HepG2 (cell line): ENCODE measurements at regions of chr5 and their contacts with region 1.

Region 1: GRCh38 chr5:151659001-151659754 is 27.5 kb downstream of the SPARC start:
- DNase-seq: peak; percentile 57
- ATAC-seq: peak; percentile 96
- H3K4me3 ChIP-seq: no peak overlapping the region
- H3K27ac ChIP-seq: no peak overlapping the region
- H3K4me1 ChIP-seq: peaks cover 9% of the 10 kb centered on the region
- H3K27me3 ChIP-seq: peaks cover 0 to 10% of the 10 kb centered on the region in 2 experiments; a peak in 2 of 5 replicates
- CTCF ChIP-seq: peak; percentile 91
- EP300 ChIP-seq: no peak
- POLR2A ChIP-seq: no peak
- RAD21 ChIP-seq: peak; percentile 90

Region 2: DNA sequence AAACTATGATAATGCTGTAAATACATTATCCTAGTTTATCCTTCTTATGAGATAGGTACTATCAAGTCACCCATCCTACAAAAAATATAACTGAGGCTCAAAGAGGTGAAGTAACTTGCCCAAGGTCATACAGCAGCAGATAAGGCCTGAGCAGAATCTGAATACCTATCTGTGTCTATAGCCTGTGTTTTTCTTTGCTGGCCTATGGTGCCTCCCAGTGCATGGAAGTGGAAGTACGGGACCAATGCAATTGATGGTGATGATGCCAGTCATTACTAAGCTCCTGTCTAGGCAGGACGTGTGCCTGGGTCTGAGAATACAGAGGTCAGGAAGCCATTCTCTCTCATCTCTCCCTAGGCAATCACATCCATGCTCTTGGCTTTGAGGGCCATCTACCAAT is 135.8 kb before region 1 on chr5:
- CTCF ChIA-PET with region 1: no interaction called
- POLR2A ChIA-PET with region 1: no interaction called
- in situ Hi-C with region 1: loop called (anchors 10 kb)
- intact Hi-C with region 1: no loop called
- DNase-seq: peak; percentile 60
- ATAC-seq: peak; percentile 92
- H3K4me3 ChIP-seq: no peak overlapping the region
- H3K27ac ChIP-seq: no peak overlapping the region
- H3K4me1 ChIP-seq: no peaks in the 10 kb centered on the region
- H3K27me3 ChIP-seq: peaks cover 0 to 12% of the 10 kb centered on the region in 2 experiments; a peak in 3 of 5 replicates
- CTCF ChIP-seq: peak; percentile 73
- EP300 ChIP-seq: no peak
- POLR2A ChIP-seq: no peak
- RAD21 ChIP-seq: peak; percentile 69

Region 3: GRCh38 chr5:151719228-151720000 is 60.2 kb after region 1 on chr5:
- CTCF ChIA-PET with region 1: interaction called, 38 read pairs
- POLR2A ChIA-PET with region 1: no interaction called
- in situ Hi-C with region 1: no loop called
- intact Hi-C with region 1: loop called (anchors 1 kb)
- DNase-seq: peak; percentile 51
- ATAC-seq: peak; percentile 84
- H3K4me3 ChIP-seq: no peak overlapping the region
- H3K27ac ChIP-seq: no peak overlapping the region
- H3K4me1 ChIP-seq: no peaks in the 10 kb centered on the region
- H3K27me3 ChIP-seq: no peaks in the 10 kb centered on the region
- CTCF ChIP-seq: peak; percentile 70
- EP300 ChIP-seq: no peak
- POLR2A ChIP-seq: no peak
- RAD21 ChIP-seq: peak; percentile 52; the same call in 1 of the 2 replicates

Region 4: DNA sequence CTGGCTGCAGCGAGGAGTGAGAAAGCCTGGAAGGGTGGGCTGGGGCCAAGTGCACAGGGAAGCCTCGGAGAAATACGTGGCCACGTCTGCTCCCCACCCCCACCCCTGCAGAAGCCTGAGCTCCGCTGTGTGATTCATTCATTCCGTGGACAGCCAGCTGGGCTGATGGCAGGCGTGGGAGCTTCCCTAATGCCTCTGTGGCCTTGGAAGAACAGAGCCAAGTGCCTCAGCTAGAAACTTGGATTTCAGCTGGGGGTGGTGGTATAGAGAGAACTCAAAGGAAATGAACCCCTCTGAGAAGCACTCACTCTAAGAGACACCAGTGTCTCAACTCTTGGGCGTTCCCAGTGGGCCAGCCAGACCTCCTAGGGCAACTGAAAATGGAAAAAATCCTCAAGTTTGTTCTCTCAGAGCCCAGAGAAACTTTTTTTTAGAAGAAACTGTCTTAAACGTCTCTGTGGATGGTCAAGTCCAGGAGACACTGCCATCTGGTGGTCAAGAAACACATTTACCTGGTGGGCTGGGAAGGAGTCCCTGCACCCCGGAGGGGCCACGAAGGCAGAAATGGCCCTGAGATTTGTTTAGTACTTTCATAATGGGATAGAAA is 81.3 kb after region 1 on chr5:
- CTCF ChIA-PET with region 1: interaction called, 66 read pairs
- POLR2A ChIA-PET with region 1: interaction called, 3 read pairs
- in situ Hi-C with region 1: loop called (anchors 5 kb)
- intact Hi-C with region 1: loop called (anchors 1 kb)
- DNase-seq: peak; percentile 30
- ATAC-seq: peak; percentile 74
- H3K4me3 ChIP-seq: no peak overlapping the region
- H3K27ac ChIP-seq: no peak overlapping the region
- H3K4me1 ChIP-seq: no peaks in the 10 kb centered on the region
- H3K27me3 ChIP-seq: no peaks in the 10 kb centered on the region
- CTCF ChIP-seq: peak; percentile 76
- EP300 ChIP-seq: no peak
- POLR2A ChIP-seq: no peak
- RAD21 ChIP-seq: peak; percentile 54; the same call in 1 of the 2 replicates